ENCODE measurements at regions of chr19 and their contacts with region 1.

Region 1: GRCh38 chr19:4624733-4625362 is 14.5 kb upstream of the TNFAIP8L1 start:
- DNase-seq: peak; percentile 66
- ATAC-seq: peak; percentile 62
- H3K4me3 ChIP-seq: peak overlapping the region in 1 of 3 experiments; percentile 16; a peak in 1 of 6 replicates
- H3K27ac ChIP-seq: peak overlapping the region; percentile 61
- H3K4me1 ChIP-seq: peaks cover 49% of the 10 kb centered on the region
- H3K27me3 ChIP-seq: peaks cover 0 to 1% of the 10 kb centered on the region in 2 experiments; a peak in 1 of 5 replicates
- CTCF ChIP-seq: peak; percentile 83
- EP300 ChIP-seq: no peak; a peak in 1 of 4 replicates
- POLR2A ChIP-seq: no peak
- RAD21 ChIP-seq: no peak

Region 2: DNA sequence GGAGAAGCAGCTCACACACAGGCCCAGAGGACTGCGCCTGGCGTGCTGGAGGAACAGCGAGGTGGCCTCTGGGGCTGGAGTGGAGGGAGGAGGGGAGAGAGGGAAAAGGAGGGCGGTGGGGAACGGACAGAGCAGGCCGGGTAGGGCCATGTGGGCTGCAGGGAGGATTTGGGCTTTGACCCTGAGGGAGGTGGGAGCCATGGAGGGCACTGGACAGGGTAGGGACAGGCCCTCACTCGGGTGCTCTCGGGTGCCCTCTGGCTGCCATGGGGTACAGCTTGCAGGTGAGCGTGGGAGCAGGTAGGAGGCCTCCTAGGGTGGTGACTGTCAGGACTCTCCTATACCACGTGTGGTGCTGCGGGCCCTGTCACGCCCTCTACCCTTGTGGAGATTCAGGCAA is 129.4 kb before region 1 on chr19:
- CTCF ChIA-PET with region 1: no interaction called
- POLR2A ChIA-PET with region 1: no interaction called
- in situ Hi-C with region 1: no loop called
- intact Hi-C with region 1: no loop called
- DNase-seq: no peak
- ATAC-seq: peak; percentile 68
- H3K4me3 ChIP-seq: no peak overlapping the region
- H3K27ac ChIP-seq: no peak overlapping the region
- H3K4me1 ChIP-seq: no peaks in the 10 kb centered on the region
- H3K27me3 ChIP-seq: no peaks in the 10 kb centered on the region; a peak in 1 of 5 replicates
- CTCF ChIP-seq: peak; percentile 47
- EP300 ChIP-seq: no peak
- POLR2A ChIP-seq: no peak
- RAD21 ChIP-seq: no peak

Region 3: GRCh38 chr19:4589579-4590410 is 35.1 kb before region 1 on chr19:
- CTCF ChIA-PET with region 1: no interaction called
- POLR2A ChIA-PET with region 1: interaction called, 9 read pairs
- in situ Hi-C with region 1: no loop called
- intact Hi-C with region 1: loop called (anchors 5 kb)
- DNase-seq: peak; percentile 65
- ATAC-seq: peak; percentile 87
- H3K4me3 ChIP-seq: peak overlapping the region in 1 of 3 experiments; percentile 26; a peak in 2 of 6 replicates
- H3K27ac ChIP-seq: no peak overlapping the region
- H3K4me1 ChIP-seq: peaks cover 68% of the 10 kb centered on the region
- H3K27me3 ChIP-seq: peaks cover 1 to 7% of the 10 kb centered on the region in 2 experiments; a peak in 2 of 5 replicates
- CTCF ChIP-seq: peak; percentile 90
- EP300 ChIP-seq: no peak
- POLR2A ChIP-seq: no peak
- RAD21 ChIP-seq: peak; percentile 73

Region 4: GRCh38 chr19:4609878-4610511 is 14.9 kb before region 1 on chr19:
- CTCF ChIA-PET with region 1: no interaction called
- POLR2A ChIA-PET with region 1: no interaction called
- in situ Hi-C with region 1: no loop called
- intact Hi-C with region 1: no loop called
- DNase-seq: no peak
- ATAC-seq: peak; percentile 61
- H3K4me3 ChIP-seq: peak overlapping the region in 2 of 3 experiments; percentile 41 to 59; a peak in 3 of 6 replicates
- H3K27ac ChIP-seq: no peak overlapping the region
- H3K4me1 ChIP-seq: peaks cover 39% of the 10 kb centered on the region
- H3K27me3 ChIP-seq: peaks cover 0 to 13% of the 10 kb centered on the region in 2 experiments; a peak in 4 of 5 replicates
- CTCF ChIP-seq: peak; percentile 27
- EP300 ChIP-seq: no peak
- POLR2A ChIP-seq: no peak
- RAD21 ChIP-seq: no peak